Activated CD4-positive, alpha-beta T cell treated with anti-CD3 and anti-CD28 coated beads for 36 hours (primary cell): ENCODE measurements at regions of chr9 and their contacts with region 1.

Region 1: GRCh38 chr9:23254404-23255184 is 571.4 kb downstream of the ELAVL2 start:
- DNase-seq: no peak
- ATAC-seq: no peak
- H3K4me3 Mint-ChIP-seq: no peak overlapping the region
- H3K27ac Mint-ChIP-seq: no peak overlapping the region
- H3K4me1 Mint-ChIP-seq: no peaks in the 10 kb centered on the region
- H3K27me3 Mint-ChIP-seq: no peaks in the 10 kb centered on the region

Region 2: DNA sequence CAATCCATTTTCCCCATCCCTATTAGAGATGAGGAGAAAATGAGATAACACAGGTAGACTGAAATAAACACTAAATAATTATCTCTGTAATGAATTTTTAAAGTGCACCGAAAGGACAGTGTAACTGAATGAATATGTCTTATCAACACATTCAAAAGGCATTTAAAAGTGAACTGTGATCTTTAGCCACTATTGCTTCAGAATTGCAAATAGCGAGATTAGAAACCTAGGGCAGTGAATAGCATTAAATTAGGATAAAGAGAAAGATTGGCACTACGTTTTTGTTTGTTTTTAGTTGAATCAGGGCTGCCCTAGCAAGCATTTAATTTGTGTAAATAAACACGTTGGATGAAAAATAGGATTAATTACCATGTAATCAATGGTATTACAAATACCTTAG is 34.0 kb after region 1 on chr9:
- CTCF ChIA-PET with region 1: no interaction called
- POLR2A ChIA-PET with region 1: no interaction called
- intact Hi-C with region 1: loop called in 1 of 2 experiments (anchors 5 kb)
- DNase-seq: no peak
- ATAC-seq: no peak
- H3K4me3 Mint-ChIP-seq: no peak overlapping the region
- H3K27ac Mint-ChIP-seq: no peak overlapping the region
- H3K4me1 Mint-ChIP-seq: no peaks in the 10 kb centered on the region
- H3K27me3 Mint-ChIP-seq: no peaks in the 10 kb centered on the region

Region 3: GRCh38 chr9:23302281-23302680 is 47.7 kb after region 1 on chr9:
- CTCF ChIA-PET with region 1: no interaction called
- POLR2A ChIA-PET with region 1: no interaction called
- intact Hi-C with region 1: loop called in 1 of 2 experiments (anchors 5 kb)
- DNase-seq: no peak
- ATAC-seq: no peak
- H3K4me3 Mint-ChIP-seq: no peak overlapping the region
- H3K27ac Mint-ChIP-seq: no peak overlapping the region
- H3K4me1 Mint-ChIP-seq: no peaks in the 10 kb centered on the region
- H3K27me3 Mint-ChIP-seq: no peaks in the 10 kb centered on the region

Region 4: GRCh38 chr9:24090566-24090965 is 836.0 kb after region 1 on chr9:
- CTCF ChIA-PET with region 1: no interaction called
- POLR2A ChIA-PET with region 1: no interaction called
- intact Hi-C with region 1: no loop called
- DNase-seq: no peak
- ATAC-seq: no peak
- H3K4me3 Mint-ChIP-seq: no peak overlapping the region
- H3K27ac Mint-ChIP-seq: no peak overlapping the region
- H3K4me1 Mint-ChIP-seq: no peaks in the 10 kb centered on the region
- H3K27me3 Mint-ChIP-seq: no peaks in the 10 kb centered on the region